ENCODE measurements at regions of chr1 and their contacts with region 1.

Region 1: DNA sequence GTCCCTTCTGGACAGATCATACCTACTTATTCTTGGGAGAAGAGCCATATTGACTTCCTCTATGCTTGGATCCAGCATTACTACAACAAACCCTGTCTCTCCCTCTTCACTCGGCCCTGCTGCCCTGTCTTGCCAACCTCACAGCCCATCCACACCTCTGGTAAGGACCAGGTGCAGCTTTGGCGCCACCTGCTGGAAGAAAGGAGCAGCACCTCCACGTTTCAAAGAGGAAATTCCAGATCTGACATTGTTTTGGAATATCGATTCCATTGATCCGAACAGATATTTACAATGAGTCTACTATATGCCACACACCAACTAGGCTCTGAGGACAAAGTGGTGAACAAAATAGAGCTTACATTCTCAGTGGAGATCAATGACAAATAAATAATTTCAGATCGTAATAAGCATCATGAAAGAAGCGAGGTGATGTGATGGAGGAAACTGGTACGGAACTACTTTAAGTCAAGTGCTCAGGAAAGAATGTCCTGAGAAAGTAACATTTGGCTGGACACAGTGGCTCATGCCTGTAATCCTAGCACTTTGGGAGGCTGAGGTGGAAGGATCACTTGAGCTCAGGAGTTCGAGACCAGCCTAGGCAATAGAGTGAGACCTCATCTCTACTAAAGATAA is 18.7 kb downstream of the MFSD2A start:
- DNase-seq: peak; percentile 51 to 92 (median 74)
- ATAC-seq: peak; percentile 66
- H3K4me3 ChIP-seq: no peak overlapping the region
- H3K27ac ChIP-seq: no peak overlapping the region
- H3K4me1 ChIP-seq: peaks cover 0 to 21% of the 10 kb centered on the region in 2 donors
- H3K27me3 ChIP-seq: no peaks in the 10 kb centered on the region
- CTCF ChIP-seq: peak; percentile 88 to 95

Region 2: GRCh38 chr1:39922251-39922688 is 51.3 kb before region 1 on chr1:
- intact Hi-C with region 1: loop called in 1 of 2 experiments (anchors 5 kb)
- DNase-seq: no peak
- ATAC-seq: no peak
- H3K4me3 ChIP-seq: no peak overlapping the region
- H3K27ac ChIP-seq: no peak overlapping the region
- H3K4me1 ChIP-seq: peaks cover 0 to 20% of the 10 kb centered on the region in 2 donors
- H3K27me3 ChIP-seq: peaks cover 0 to 14% of the 10 kb centered on the region in 2 donors
- CTCF ChIP-seq: no peak

Region 3: GRCh38 chr1:40004857-40005256 is 31.2 kb after region 1 on chr1:
- intact Hi-C with region 1: no loop called
- DNase-seq: no peak
- ATAC-seq: no peak
- H3K4me3 ChIP-seq: no peak overlapping the region
- H3K27ac ChIP-seq: no peak overlapping the region
- H3K4me1 ChIP-seq: no peaks in the 10 kb centered on the region
- H3K27me3 ChIP-seq: no peaks in the 10 kb centered on the region
- CTCF ChIP-seq: no peak

Region 4: GRCh38 chr1:40224040-40224439 is 250.4 kb after region 1 on chr1:
- intact Hi-C with region 1: no loop called
- DNase-seq: no peak
- ATAC-seq: no peak
- H3K4me3 ChIP-seq: no peak overlapping the region
- H3K27ac ChIP-seq: no peak overlapping the region
- H3K4me1 ChIP-seq: no peaks in the 10 kb centered on the region
- H3K27me3 ChIP-seq: no peaks in the 10 kb centered on the region
- CTCF ChIP-seq: no peak

Region 5: DNA sequence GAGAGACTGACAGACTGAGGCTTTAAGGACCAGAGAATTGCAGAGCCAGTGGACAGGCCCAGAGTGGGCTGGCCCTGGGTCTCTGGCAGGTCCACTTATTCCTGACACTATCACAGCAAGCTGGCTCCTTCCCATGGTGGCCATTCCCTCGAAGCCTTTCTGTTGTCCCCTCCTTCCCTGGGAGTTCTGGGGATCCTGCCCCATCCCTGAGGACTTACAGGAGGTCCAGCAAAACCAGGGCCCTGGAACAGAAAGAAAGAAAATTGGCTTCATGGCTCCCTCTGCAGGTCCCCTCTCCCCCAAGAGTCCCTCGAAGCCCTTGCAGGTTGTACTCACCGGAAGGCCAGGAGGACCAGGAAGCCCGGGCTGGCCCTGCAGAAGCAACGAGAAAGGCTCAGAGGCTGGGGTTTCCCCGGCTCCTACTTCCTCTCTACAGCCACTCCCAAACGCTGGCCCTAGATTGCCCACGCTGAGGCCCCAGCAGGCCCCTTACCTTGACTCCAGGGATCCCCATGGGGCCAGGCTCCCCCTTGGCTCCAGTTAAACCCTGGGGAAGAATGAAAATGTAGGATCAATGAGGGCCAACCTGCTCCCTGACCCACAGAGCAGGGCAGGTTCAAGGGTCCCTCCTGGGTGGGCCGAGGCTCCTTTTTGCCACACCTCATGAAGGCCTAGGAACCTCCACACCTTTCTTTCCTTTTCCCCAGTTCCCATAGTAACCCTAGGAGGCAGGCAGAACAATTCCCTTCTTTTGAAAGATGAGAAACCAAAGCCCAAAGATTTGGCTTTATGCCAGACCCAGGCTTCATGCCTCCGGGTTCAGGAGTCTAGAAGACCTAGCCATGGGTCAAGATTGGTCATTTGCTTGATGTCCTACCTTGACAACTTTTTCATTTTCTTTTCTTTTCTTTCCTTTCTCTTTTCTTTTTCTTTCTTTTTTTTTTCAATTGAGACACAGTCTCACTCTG is 338.9 kb after region 1 on chr1:
- intact Hi-C with region 1: no loop called
- DNase-seq: peak in 2 of 4 donors; percentile 80 to 90
- ATAC-seq: peak; percentile 31
- H3K4me3 ChIP-seq: no peak overlapping the region
- H3K27ac ChIP-seq: no peak overlapping the region
- H3K4me1 ChIP-seq: peaks cover 10 to 44% of the 10 kb centered on the region in 2 donors
- H3K27me3 ChIP-seq: peaks cover 16 to 36% of the 10 kb centered on the region in 2 donors
- CTCF ChIP-seq: no peak